GM12878 (cell line): ENCODE measurements at regions of chr20 and their contacts with region 1.

Region 1: GRCh38 chr20:815914-816606 is 17.5 kb upstream of the FAM110A start:
- DNase-seq: no peak
- ATAC-seq: peak; percentile 75
- H3K4me3 ChIP-seq: no peak overlapping the region
- H3K27ac ChIP-seq: no peak overlapping the region
- H3K4me1 ChIP-seq: no peaks in the 10 kb centered on the region
- H3K27me3 ChIP-seq: no peaks in the 10 kb centered on the region
- CTCF ChIP-seq: peak; percentile 98
- EP300 ChIP-seq: no peak
- POLR2A ChIP-seq: no peak
- RAD21 ChIP-seq: peak; percentile 95

Region 2: GRCh38 chr20:859751-860231 is 43.7 kb after region 1 on chr20:
- CTCF ChIA-PET with region 1: no interaction called
- POLR2A ChIA-PET with region 1: no interaction called
- RAD21 ChIA-PET with region 1: interaction called, 3 read pairs
- SMC1A ChIA-PET with region 1: no interaction called
- in situ Hi-C with region 1: no loop called
- intact Hi-C with region 1: loop called (anchors 5 kb)
- DNase-seq: no peak
- ATAC-seq: no peak
- H3K4me3 ChIP-seq: no peak overlapping the region
- H3K27ac ChIP-seq: no peak overlapping the region
- H3K4me1 ChIP-seq: peaks cover 12% of the 10 kb centered on the region
- H3K27me3 ChIP-seq: no peaks in the 10 kb centered on the region
- CTCF ChIP-seq: no peak
- EP300 ChIP-seq: no peak
- POLR2A ChIP-seq: no peak
- RAD21 ChIP-seq: no peak

Region 3: GRCh38 chr20:956330-956951 is 140.4 kb after region 1 on chr20:
- CTCF ChIA-PET with region 1: interaction called, 142 read pairs
- POLR2A ChIA-PET with region 1: no interaction called
- RAD21 ChIA-PET with region 1: interaction called, 94 read pairs
- SMC1A ChIA-PET with region 1: interaction called, 52 read pairs
- in situ Hi-C with region 1: loop called (anchors 5 kb)
- intact Hi-C with region 1: loop called (anchors 1 kb)
- DNase-seq: peak; percentile 12
- ATAC-seq: peak; percentile 96
- H3K4me3 ChIP-seq: no peak overlapping the region
- H3K27ac ChIP-seq: no peak overlapping the region
- H3K4me1 ChIP-seq: no peaks in the 10 kb centered on the region
- H3K27me3 ChIP-seq: no peaks in the 10 kb centered on the region; a peak in 1 of 4 replicates
- CTCF ChIP-seq: peak; percentile 97 to 99 (median 98)
- EP300 ChIP-seq: no peak
- POLR2A ChIP-seq: no peak
- RAD21 ChIP-seq: peak; percentile 100

Region 4: DNA sequence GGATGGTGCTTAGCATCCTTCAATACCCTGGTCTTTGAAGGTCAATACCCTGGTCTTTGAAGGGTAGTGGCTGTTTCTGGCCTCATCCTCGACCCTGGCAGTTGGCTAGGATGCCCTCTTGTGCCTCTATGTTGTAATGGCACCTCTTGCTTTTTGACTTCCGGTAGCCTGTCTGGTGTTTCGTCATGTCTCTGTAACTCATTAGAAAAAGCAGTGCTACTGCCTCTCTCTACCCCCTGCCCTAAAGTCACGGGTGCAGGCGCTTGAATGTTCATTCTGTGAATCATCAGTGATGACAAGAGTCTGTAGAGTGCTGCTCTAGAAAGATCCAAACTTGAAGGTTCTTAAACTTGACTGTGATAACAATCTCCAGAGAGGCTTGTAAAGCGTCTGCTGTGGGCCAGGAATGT is 157.7 kb after region 1 on chr20:
- CTCF ChIA-PET with region 1: interaction called, 5 read pairs
- POLR2A ChIA-PET with region 1: no interaction called
- RAD21 ChIA-PET with region 1: interaction called, 3 read pairs
- SMC1A ChIA-PET with region 1: interaction called, 3 read pairs
- in situ Hi-C with region 1: no loop called
- intact Hi-C with region 1: loop called (anchors 1 kb)
- DNase-seq: peak; percentile 1
- ATAC-seq: peak; percentile 91
- H3K4me3 ChIP-seq: no peak overlapping the region
- H3K27ac ChIP-seq: no peak overlapping the region
- H3K4me1 ChIP-seq: no peaks in the 10 kb centered on the region
- H3K27me3 ChIP-seq: no peaks in the 10 kb centered on the region
- CTCF ChIP-seq: peak; percentile 50 to 58 (median 57)
- EP300 ChIP-seq: no peak
- POLR2A ChIP-seq: no peak
- RAD21 ChIP-seq: peak; percentile 40

Region 5: DNA sequence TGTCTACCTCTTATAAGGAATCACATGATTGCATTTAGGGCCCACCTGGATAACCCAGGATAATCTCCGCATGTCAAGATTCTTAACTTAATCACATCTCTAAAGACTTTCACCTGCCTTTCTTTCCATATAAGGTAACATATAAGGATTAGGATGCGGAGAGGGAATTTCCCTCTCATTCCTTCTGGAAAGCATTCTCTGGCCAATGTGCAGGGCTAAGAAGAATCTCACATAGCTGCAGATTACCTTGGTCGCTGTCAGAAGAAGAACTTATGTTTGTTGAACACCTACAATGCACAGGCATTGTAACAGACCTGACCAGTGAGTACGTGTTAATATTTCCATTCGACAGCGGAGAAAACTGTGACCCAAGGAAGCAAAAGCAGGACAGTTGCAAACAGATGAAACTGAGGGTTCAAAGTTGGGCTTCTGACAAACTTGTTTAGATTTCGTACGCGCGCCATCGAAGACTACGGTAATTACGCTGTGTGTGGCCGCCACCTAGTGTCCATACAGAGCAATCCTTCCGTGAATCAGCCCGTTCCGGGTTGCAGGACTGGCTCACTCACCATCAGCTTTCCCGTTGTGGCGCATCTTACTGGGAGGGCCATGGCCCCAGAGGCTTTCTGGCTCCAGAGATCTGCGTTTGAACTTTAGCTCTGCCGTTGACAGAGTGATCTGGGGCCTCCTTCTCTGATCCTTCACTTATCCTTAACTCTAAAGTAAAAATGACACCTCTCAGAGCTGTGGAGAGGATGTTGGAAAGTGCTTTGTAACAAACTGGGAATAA is 396.7 kb after region 1 on chr20:
- CTCF ChIA-PET with region 1: interaction called, 3 read pairs
- POLR2A ChIA-PET with region 1: no interaction called
- RAD21 ChIA-PET with region 1: no interaction called
- SMC1A ChIA-PET with region 1: no interaction called
- in situ Hi-C with region 1: loop called (anchors 5 kb)
- intact Hi-C with region 1: loop called (anchors 1 kb)
- DNase-seq: no peak
- ATAC-seq: peak; percentile 97
- H3K4me3 ChIP-seq: no peak overlapping the region
- H3K27ac ChIP-seq: no peak overlapping the region
- H3K4me1 ChIP-seq: peaks cover 2% of the 10 kb centered on the region; the same call in 1 of the 2 replicates
- H3K27me3 ChIP-seq: peaks cover 0 to 4% of the 10 kb centered on the region in 2 experiments; a peak in 1 of 4 replicates
- CTCF ChIP-seq: peak; percentile 76 to 89 (median 87)
- EP300 ChIP-seq: no peak
- POLR2A ChIP-seq: no peak
- RAD21 ChIP-seq: peak; percentile 71